PC-3 (cell line): ENCODE measurements at regions of chr7 and their contacts with region 1.

Region 1: GRCh38 chr7:115087437-115087836 is 165.5 kb downstream of the MDFIC start:
- DNase-seq: peak; percentile 88
- ATAC-seq: peak; percentile 86
- H3K4me3 ChIP-seq: 0 out of 2 replicates have a peak overlapping the region, but pooled peaks have one; percentile 14
- H3K27ac ChIP-seq: no peak overlapping the region
- H3K4me1 ChIP-seq: peaks cover 33% of the 10 kb centered on the region
- H3K27me3 ChIP-seq: no peaks in the 10 kb centered on the region
- CTCF ChIP-seq: no peak

Region 2: GRCh38 chr7:114930829-114931655 is 156.4 kb before region 1 on chr7:
- CTCF ChIA-PET with region 1: no interaction called
- POLR2A ChIA-PET with region 1: no interaction called
- intact Hi-C with region 1: loop called (anchors 5 kb)
- DNase-seq: no peak
- ATAC-seq: no peak
- H3K4me3 ChIP-seq: no peak overlapping the region
- H3K27ac ChIP-seq: no peak overlapping the region
- H3K4me1 ChIP-seq: 0 out of 2 replicates have a peak, but pooled peaks cover 11% of the 10 kb centered on the region
- H3K27me3 ChIP-seq: no peaks in the 10 kb centered on the region
- CTCF ChIP-seq: no peak

Region 3: DNA sequence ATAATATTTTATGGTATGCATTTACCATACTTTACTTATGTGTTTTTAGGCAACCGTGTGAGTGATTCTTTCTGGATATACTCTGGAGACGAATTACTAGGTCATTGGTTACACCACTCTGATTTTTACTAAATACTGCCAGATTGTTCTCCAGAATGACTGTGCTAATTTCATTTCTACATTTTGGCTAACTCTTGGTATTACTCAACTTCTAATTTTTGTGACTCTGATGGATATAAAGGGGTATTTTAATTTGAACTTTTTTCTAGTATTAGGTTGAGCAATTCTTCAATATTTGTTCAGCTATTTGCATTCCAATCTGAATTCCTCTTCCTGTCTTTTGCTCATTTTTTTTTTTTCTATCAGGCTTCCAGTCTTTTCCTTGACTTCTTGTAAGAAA is 58.1 kb after region 1 on chr7:
- CTCF ChIA-PET with region 1: no interaction called
- POLR2A ChIA-PET with region 1: no interaction called
- intact Hi-C with region 1: loop called (anchors 5 kb)
- DNase-seq: peak; percentile 68
- ATAC-seq: peak; percentile 42
- H3K4me3 ChIP-seq: peak overlapping the region; percentile 51
- H3K27ac ChIP-seq: peak overlapping the region; percentile 82
- H3K4me1 ChIP-seq: peaks cover 23% of the 10 kb centered on the region
- H3K27me3 ChIP-seq: no peaks in the 10 kb centered on the region
- CTCF ChIP-seq: no peak